IMR-90 (cell line): ENCODE measurements at regions of chr19 and their contacts with region 1.

Region 1: DNA sequence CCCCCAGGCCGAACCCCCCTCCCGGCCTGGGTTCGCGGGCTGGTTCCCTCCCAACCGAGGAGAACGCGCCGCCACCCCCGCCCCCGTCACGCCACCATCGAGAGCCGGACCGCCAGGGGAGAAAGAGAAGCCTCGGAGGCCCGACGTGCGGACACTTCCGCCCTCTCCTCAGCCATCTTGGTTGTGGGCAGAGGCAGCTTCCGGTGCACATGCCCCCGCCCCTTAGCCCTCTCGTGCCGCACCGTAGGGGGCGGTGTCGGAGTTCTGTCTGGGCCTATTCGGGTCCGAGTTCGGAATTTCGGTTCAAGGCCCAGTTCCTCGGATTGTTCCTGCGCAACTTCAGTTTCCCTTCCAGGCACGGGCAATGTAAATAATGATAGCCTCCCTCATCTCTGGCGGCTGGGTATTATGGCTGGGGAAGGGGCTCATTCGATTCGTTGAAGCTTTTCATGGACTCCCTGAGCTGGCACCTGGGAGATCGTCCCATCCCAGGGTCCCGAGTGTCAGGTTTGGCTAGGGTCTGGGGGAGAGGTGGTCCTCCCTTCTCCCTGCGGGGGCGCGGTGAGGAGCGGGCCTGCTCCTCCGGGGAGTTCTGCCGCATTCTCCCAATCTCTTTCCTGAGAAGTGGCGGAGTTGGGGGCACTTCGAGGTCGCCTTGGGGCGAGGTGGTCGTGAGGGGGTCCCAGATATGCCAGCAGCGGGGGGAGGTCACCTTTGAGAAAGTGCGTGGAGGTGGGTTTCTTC is at the starts of genes IER2 and STX10:
- DNase-seq: peak; percentile 94
- ATAC-seq: peak; percentile 51
- H3K4me3 ChIP-seq: peak within 1 kb of the TSS; percentile 72
- H3K27ac ChIP-seq: peak within 1 kb of the TSS; percentile 97
- H3K4me1 ChIP-seq: peaks cover 8% of the 10 kb centered on the region
- H3K27me3 ChIP-seq: no peaks in the 10 kb centered on the region
- CTCF ChIP-seq: peak; percentile 64
- POLR2A ChIP-seq: peak; percentile 87
- RAD21 ChIP-seq: peak; percentile 43
- total RNA-seq, gene IER2: 7.7 and 17.5 TPM in 2 replicates
- total RNA-seq, gene STX10: 64.9 and 76.7 TPM in 2 replicates

Region 2: GRCh38 chr19:13117772-13118423 is 32.5 kb before region 1 on chr19 and contains the start of gene NACC1:
- CTCF ChIA-PET with region 1: interaction called, 3 read pairs
- POLR2A ChIA-PET with region 1: interaction called, 3 read pairs
- dilution Hi-C with region 1: no loop called
- in situ Hi-C with region 1: no loop called
- intact Hi-C with region 1: loop called (anchors 1 kb)
- DNase-seq: peak; percentile 82
- ATAC-seq: peak; percentile 89
- H3K4me3 ChIP-seq: peak within 1 kb of the TSS; percentile 99
- H3K27ac ChIP-seq: peak within 1 kb of the TSS; percentile 97
- H3K4me1 ChIP-seq: peaks cover 25% of the 10 kb centered on the region
- H3K27me3 ChIP-seq: no peaks in the 10 kb centered on the region
- CTCF ChIP-seq: no peak
- POLR2A ChIP-seq: no peak
- RAD21 ChIP-seq: no peak
- total RNA-seq, gene NACC1: 42.5 and 56.7 TPM in 2 replicates

Region 3: GRCh38 chr19:13846557-13847406 is 696.4 kb after region 1 on chr19:
- CTCF ChIA-PET with region 1: no interaction called
- POLR2A ChIA-PET with region 1: no interaction called
- dilution Hi-C with region 1: no loop called
- in situ Hi-C with region 1: loop called (anchors 10 kb)
- intact Hi-C with region 1: no loop called
- DNase-seq: peak; percentile 93
- ATAC-seq: peak; percentile 13
- H3K4me3 ChIP-seq: peak overlapping the region; percentile 6; the same call in 1 of the 2 replicates
- H3K27ac ChIP-seq: peak overlapping the region; percentile 99
- H3K4me1 ChIP-seq: peaks cover 39% of the 10 kb centered on the region
- H3K27me3 ChIP-seq: no peaks in the 10 kb centered on the region
- CTCF ChIP-seq: no peak
- POLR2A ChIP-seq: no peak
- RAD21 ChIP-seq: 0 out of 2 replicates have a peak, but pooled peaks have one; percentile 12